PC-9 (cell line): ENCODE measurements at regions of chr11 and their contacts with region 1.

Region 1: DNA sequence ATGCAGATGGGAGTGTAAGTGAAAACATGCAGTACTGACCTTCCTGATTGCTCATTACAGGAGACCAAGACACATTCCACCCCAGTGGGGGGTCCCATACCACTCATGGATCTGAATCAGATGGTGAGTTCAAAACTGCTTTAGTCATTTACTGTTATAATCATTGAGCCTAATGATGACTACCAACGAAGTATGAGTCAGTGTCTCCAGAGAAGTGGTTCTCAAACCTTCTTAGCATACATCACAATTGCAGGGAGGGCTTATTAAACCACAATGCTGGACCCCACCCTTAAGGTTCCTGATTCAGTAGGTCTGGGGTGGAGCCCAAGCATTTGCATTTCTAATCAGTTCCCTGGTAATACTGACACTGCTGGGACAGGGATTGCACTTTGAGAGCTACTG is 75.8 kb downstream of the CD44 start:
- DNase-seq: peak; percentile 58 to 89
- H3K4me3 ChIP-seq: no peak overlapping the region
- H3K27ac ChIP-seq: peak overlapping the region; percentile 64
- H3K4me1 ChIP-seq: peaks cover 67% of the 10 kb centered on the region
- H3K27me3 ChIP-seq: no peaks in the 10 kb centered on the region
- CTCF ChIP-seq: no peak

Region 2: GRCh38 chr11:35064114-35064800 is 150.5 kb before region 1 on chr11:
- CTCF ChIA-PET with region 1: no interaction called
- POLR2A ChIA-PET with region 1: interaction called, 11 read pairs
- intact Hi-C with region 1: no loop called
- DNase-seq: no peak
- H3K4me3 ChIP-seq: no peak overlapping the region
- H3K27ac ChIP-seq: no peak overlapping the region
- H3K4me1 ChIP-seq: no peaks in the 10 kb centered on the region
- H3K27me3 ChIP-seq: no peaks in the 10 kb centered on the region
- CTCF ChIP-seq: no peak